K562 (cell line): ENCODE measurements at regions of chr2 and their contacts with region 1.

Region 1: GRCh38 chr2:85266146-85267041 is 61.4 kb downstream of the TGOLN2 start:
- DNase-seq: peak; percentile 77 to 87 (median 86)
- ATAC-seq: peak; percentile 97
- H3K4me3 ChIP-seq: no peak overlapping the region
- H3K27ac ChIP-seq: no peak overlapping the region
- H3K4me1 ChIP-seq: no peaks in the 10 kb centered on the region
- H3K27me3 ChIP-seq: peaks cover 29 to 49% of the 10 kb centered on the region in 2 experiments; a peak in 4 of 5 replicates
- CTCF ChIP-seq: peak; percentile 84 to 97 (median 89)
- EP300 ChIP-seq: no peak
- POLR2A ChIP-seq: no peak
- RAD21 ChIP-seq: peak; percentile 49 to 74; a peak in 3 of 4 replicates

Region 2: GRCh38 chr2:85288244-85288725 is 21.9 kb after region 1 on chr2:
- CTCF ChIA-PET with region 1: interaction called, 6 read pairs
- POLR2A ChIA-PET with region 1: interaction called, 3 read pairs
- in situ Hi-C with region 1: no loop called
- intact Hi-C with region 1: loop called (anchors 1 kb)
- DNase-seq: no peak
- ATAC-seq: no peak
- H3K4me3 ChIP-seq: no peak overlapping the region
- H3K27ac ChIP-seq: no peak overlapping the region
- H3K4me1 ChIP-seq: no peaks in the 10 kb centered on the region; a peak in 1 of 5 replicates
- H3K27me3 ChIP-seq: peaks cover 49 to 68% of the 10 kb centered on the region in 2 experiments
- CTCF ChIP-seq: no peak
- EP300 ChIP-seq: no peak
- POLR2A ChIP-seq: no peak
- RAD21 ChIP-seq: no peak

Region 3: GRCh38 chr2:85302121-85302520 is 35.7 kb after region 1 on chr2:
- CTCF ChIA-PET with region 1: interaction called, 26 read pairs
- POLR2A ChIA-PET with region 1: no interaction called
- in situ Hi-C with region 1: no loop called
- intact Hi-C with region 1: loop called (anchors 1 kb)
- DNase-seq: no peak
- ATAC-seq: peak; percentile 13; the same call in 1 of the 3 replicates
- H3K4me3 ChIP-seq: no peak overlapping the region
- H3K27ac ChIP-seq: no peak overlapping the region
- H3K4me1 ChIP-seq: peaks cover 3 to 20% of the 10 kb centered on the region in 2 experiments; a peak in 3 of 5 replicates
- H3K27me3 ChIP-seq: peaks cover 27 to 53% of the 10 kb centered on the region in 2 experiments; a peak in 4 of 5 replicates
- CTCF ChIP-seq: no peak
- EP300 ChIP-seq: no peak
- POLR2A ChIP-seq: no peak
- RAD21 ChIP-seq: no peak